Heart right ventricle (tissue), 16 donors: ENCODE measurements at regions of chr16 and their contacts with region 1.

Region 1: DNA sequence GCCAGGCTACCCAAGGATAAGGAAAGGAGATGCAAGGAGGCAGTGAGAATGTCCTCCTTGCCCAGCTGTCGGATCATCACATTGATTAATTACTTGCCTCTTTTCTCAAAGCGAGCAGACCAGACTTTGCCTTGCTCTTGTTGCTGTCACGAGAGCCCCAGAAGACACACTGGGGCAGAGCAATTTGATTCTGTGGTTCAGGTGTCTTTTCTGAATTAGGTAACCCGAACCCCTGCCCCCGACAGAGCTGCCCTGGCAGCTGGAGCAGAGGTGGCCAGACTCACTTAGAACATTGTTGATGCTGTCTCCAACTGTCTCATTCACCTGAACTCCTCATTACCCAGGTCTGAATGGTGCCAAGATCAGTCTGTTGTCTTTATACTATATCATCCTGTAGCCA is 34.3 kb downstream of the VAT1L start:
- DNase-seq: no peak
- ATAC-seq: no peak
- H3K4me3 ChIP-seq: no peak overlapping the region
- H3K27ac ChIP-seq: no peak overlapping the region
- H3K4me1 ChIP-seq: no peaks in the 10 kb centered on the region
- H3K27me3 ChIP-seq: peaks cover 0 to 14% (median 0%) of the 10 kb centered on the region in 7 donors
- CTCF ChIP-seq: no peak

Region 2: GRCh38 chr16:77885571-77886295 is 63.1 kb after region 1 on chr16:
- intact Hi-C with region 1: loop called in 1 of 10 experiments (anchors 10 kb)
- DNase-seq: no peak
- ATAC-seq: no peak
- H3K4me3 ChIP-seq: no peak overlapping the region
- H3K27ac ChIP-seq: no peak overlapping the region
- H3K4me1 ChIP-seq: peaks cover 0 to 13% (median 5%) of the 10 kb centered on the region in 9 donors
- H3K27me3 ChIP-seq: no peaks in the 10 kb centered on the region
- CTCF ChIP-seq: no peak